Activated B cell treated with CpG ODN at 0.5 μM for 24 hours (primary cell): ENCODE measurements at regions of chr12 and their contacts with region 1.

Region 1: DNA sequence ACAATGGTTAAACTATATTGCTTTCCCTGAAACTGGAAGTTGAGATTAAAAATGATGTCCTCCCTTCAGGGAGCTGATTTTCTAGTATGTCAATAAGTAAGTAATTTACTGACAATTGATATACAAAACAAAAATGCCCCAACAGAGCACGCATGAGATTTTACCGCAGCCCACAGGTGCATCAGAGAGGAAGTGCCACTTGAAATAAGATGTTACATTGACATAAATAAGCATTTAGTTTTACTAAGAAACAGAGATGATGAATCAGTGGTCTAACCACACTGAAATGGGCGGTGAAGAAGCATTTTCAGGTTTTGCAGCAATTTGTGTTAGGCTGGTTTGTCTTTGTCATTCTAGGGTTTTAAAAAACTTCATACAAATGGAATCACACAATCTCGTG is 8.8 kb upstream of the CLECL1 start:
- DNase-seq: no peak
- ATAC-seq: peak; percentile 56
- H3K4me3 Mint-ChIP-seq: peak overlapping the region; percentile 75
- H3K27ac Mint-ChIP-seq: peak overlapping the region; percentile 94
- H3K4me1 Mint-ChIP-seq: peaks cover 72% of the 10 kb centered on the region
- H3K27me3 Mint-ChIP-seq: no peaks in the 10 kb centered on the region
- CTCF ChIP-seq: no peak

Region 2: DNA sequence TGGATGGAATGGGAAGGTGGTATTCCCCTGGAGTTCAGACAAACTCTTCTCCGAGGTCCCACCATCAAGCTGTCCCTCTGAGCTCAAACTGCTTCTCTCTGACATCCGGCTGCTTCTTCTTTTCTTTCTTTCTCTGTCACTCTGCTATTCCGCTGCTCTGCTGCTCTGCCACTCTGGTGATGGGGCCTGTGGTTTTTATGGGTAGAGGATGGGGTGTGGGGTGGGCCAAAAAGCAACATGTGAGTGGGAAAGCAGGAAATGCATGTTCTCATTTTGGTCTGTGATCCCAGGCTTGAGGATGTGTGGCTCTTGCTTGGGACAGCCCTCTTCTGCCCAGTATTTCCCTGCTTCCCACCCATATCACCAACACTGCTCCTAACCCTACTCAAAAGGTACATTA is 39.5 kb before region 1 on chr12:
- CTCF ChIA-PET with region 1: interaction called, 24 read pairs
- POLR2A ChIA-PET with region 1: interaction called, 89 read pairs
- intact Hi-C with region 1: no loop called
- DNase-seq: no peak
- ATAC-seq: peak; percentile 41
- H3K4me3 Mint-ChIP-seq: peak overlapping the region; percentile 65
- H3K27ac Mint-ChIP-seq: peak overlapping the region; percentile 85
- H3K4me1 Mint-ChIP-seq: peaks cover 85% of the 10 kb centered on the region
- H3K27me3 Mint-ChIP-seq: no peaks in the 10 kb centered on the region
- CTCF ChIP-seq: no peak

Region 3: DNA sequence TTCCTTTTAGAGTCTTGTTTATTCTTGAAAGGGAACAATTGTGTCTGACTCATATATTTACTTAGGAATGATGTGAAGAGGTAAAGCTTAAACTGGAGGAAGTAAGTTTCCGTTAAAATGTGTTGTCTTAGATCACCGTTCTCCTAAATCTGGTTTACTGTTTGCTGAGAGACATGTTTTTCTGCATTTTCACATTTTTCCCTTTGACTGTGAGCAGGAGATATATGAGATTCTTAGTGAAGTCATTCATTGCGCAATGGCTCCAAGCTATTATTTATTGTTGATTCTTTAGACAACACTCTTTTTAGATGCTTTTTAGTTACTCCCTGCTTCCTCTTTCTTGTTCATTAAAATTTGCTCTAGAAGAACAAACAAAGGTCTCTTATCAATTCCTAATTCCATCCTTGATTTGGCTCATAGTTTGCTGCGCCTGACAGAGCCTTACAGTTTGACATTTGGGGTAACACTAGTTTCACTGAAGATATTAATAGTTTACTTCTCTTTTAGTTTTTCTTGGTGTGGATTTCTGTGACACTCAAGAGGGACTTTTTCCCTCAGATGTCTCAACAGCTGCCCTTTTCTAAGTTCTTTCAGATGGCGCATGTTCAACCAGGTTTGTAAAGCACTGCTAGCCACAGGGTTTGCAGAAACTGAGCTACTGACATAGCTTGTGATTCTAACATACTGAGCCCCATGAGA is 20.2 kb before region 1 on chr12:
- CTCF ChIA-PET with region 1: interaction called, 16 read pairs
- POLR2A ChIA-PET with region 1: interaction called, 87 read pairs
- intact Hi-C with region 1: loop called (anchors 1 kb)
- DNase-seq: no peak
- ATAC-seq: peak; percentile 85
- H3K4me3 Mint-ChIP-seq: peak overlapping the region; percentile 69
- H3K27ac Mint-ChIP-seq: peak overlapping the region; percentile 96
- H3K4me1 Mint-ChIP-seq: peaks cover 95% of the 10 kb centered on the region
- H3K27me3 Mint-ChIP-seq: no peaks in the 10 kb centered on the region
- CTCF ChIP-seq: no peak

Region 4: DNA sequence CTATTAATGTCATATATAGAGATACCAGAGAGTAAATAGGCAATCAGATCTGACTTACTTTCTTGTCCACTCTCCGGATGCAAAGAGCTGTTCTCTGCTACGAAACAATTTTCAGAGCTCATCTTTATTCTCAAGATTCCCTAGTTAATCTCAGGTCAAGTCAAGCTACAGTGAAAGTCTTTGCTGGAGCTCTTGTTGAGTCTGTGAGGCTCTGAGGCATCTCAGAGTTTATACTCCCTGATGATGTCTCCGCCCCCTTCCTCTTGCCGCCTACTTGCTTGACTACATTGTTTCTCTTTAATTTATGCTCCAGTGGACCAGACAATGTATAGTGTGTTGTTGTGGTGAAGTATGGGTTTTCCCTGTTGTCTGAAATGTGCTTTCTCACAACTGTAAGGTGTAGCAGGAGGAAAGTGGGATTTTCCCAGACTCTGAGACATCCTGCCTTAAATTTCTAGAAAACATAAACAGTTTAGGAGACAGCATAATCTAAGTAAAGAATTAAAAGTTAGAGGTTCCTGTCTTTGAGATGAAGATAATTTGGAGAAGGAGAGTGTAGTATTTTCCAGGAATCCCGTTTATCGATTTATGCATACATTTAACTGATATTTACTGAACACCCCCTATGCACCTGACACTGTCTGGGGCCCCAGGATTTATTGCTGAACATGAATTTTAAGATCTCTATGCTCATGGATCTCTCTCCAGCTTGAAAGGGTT is 19.1 kb after region 1 on chr12 and contains the start of gene CD69:
- CTCF ChIA-PET with region 1: interaction called, 8 read pairs
- POLR2A ChIA-PET with region 1: interaction called, 18 read pairs
- intact Hi-C with region 1: no loop called
- DNase-seq: peak; percentile 33
- ATAC-seq: peak; percentile 54
- H3K4me3 Mint-ChIP-seq: peak within 1 kb of the TSS; percentile 90
- H3K27ac Mint-ChIP-seq: peak within 1 kb of the TSS; percentile 93
- H3K4me1 Mint-ChIP-seq: peaks cover 81% of the 10 kb centered on the region
- H3K27me3 Mint-ChIP-seq: no peaks in the 10 kb centered on the region
- CTCF ChIP-seq: no peak
- total RNA-seq, gene CD69: 23.7 and 26.7 TPM in 2 replicates

Region 5: DNA sequence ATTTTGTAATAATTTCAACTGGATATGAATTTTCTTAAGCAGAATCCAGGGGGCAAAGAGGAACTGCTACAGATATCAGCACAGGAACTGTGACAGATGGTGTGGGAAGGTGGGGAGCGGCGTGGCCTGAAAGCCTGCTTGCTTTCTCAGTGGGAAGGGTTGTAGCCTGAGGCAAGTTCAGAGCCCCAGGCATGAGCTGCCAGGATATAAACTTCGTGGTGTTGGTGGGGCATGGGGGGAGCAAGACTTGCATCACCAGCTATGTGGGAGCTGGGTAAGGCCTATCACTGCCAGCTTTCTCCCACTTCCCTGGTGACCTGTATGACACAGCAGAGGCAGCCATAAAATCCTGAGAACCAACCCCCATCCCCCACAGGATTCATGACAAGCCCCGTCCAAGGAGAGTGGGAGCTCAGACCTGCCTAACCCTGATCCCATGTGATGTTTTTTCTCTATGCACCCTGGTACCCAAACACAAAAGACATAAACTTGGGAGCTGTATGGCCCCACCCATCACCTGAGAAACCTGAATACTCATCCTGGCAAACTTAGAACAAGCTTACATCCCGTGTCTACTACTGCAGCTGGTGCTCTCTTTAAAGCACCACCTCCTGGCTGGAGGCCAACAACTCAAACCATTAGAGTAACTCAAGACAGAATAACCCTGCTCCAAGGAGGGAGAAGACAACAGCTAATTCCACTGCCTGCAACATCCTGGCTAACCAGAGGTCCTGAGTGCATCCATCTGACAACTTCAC is 340.6 kb after region 1 on chr12:
- CTCF ChIA-PET with region 1: no interaction called
- POLR2A ChIA-PET with region 1: no interaction called
- intact Hi-C with region 1: no loop called
- DNase-seq: no peak
- ATAC-seq: no peak
- H3K4me3 Mint-ChIP-seq: no peak overlapping the region
- H3K27ac Mint-ChIP-seq: no peak overlapping the region
- H3K4me1 Mint-ChIP-seq: peaks cover 4% of the 10 kb centered on the region
- H3K27me3 Mint-ChIP-seq: peaks cover 19% of the 10 kb centered on the region
- CTCF ChIP-seq: no peak

Region 6: DNA sequence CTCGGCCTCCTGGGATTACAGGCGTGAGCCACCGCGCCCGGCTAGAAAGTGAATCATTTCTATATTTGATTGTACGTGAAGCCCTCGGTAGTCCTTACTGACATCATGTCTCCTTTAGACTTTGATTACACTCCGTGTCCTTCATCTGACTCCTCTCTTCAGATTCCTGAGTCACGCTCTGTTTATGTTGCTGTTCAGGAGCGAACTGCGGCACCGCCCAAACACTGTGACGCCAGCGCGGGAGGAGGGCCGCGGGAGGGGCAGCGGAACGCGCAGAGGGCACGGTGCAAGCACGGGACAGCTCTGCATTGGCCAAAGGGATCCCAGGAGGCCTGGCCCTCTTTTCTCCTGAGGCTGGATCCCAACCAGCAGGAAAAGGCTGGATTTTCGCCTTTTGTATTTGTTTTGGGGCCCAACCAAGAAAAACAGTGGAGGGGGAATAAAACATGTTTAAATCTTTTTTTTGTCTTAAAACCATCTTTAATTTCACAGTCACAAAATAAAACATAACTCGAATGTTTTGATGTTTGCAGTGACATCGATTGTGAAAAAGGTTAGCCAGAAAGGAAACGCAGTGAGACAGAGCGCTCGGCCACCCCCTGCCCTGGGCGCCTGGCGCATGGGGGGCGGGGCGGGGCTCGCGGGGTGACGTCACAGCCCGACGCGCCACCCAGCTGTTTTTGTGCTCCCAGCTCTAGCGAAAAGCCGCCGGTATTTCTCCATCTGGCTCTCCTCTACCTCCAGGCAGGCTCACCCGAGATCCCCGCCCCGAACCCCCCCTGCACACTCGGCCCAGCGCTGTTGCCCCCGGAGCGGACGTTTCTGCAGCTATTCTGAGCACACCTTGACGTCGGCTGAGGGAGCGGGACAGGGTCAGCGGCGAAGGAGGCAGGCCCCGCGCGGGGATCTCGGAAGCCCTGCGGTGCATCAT is 470.7 kb after region 1 on chr12 and contains the start of gene GABARAPL1:
- CTCF ChIA-PET with region 1: no interaction called
- POLR2A ChIA-PET with region 1: no interaction called
- intact Hi-C with region 1: no loop called
- DNase-seq: peak; percentile 59
- ATAC-seq: peak; percentile 74
- H3K4me3 Mint-ChIP-seq: peak within 1 kb of the TSS; percentile 91
- H3K27ac Mint-ChIP-seq: peak within 1 kb of the TSS; percentile 46
- H3K4me1 Mint-ChIP-seq: peaks cover 17% of the 10 kb centered on the region
- H3K27me3 Mint-ChIP-seq: peaks cover 19% of the 10 kb centered on the region
- CTCF ChIP-seq: no peak
- total RNA-seq, gene GABARAPL1: 2.1 and 2.5 TPM in 2 replicates